IMR-90 (cell line): ENCODE measurements at regions of chr11 and their contacts with region 1.

Region 1: GRCh38 chr11:12200279-12201010 is 90.1 kb downstream of the MICAL2 start:
- DNase-seq: peak; percentile 83
- ATAC-seq: peak; percentile 43
- H3K4me3 ChIP-seq: no peak overlapping the region
- H3K27ac ChIP-seq: peak overlapping the region; percentile 87
- H3K4me1 ChIP-seq: peaks cover 35% of the 10 kb centered on the region
- H3K27me3 ChIP-seq: no peaks in the 10 kb centered on the region
- CTCF ChIP-seq: no peak
- POLR2A ChIP-seq: no peak
- RAD21 ChIP-seq: peak; percentile 6; the same call in 1 of the 2 replicates

Region 2: GRCh38 chr11:12182676-12183541 is 17.5 kb before region 1 on chr11:
- CTCF ChIA-PET with region 1: no interaction called
- POLR2A ChIA-PET with region 1: no interaction called
- dilution Hi-C with region 1: no loop called
- in situ Hi-C with region 1: no loop called
- intact Hi-C with region 1: loop called (anchors 2 kb)
- DNase-seq: peak; percentile 98
- ATAC-seq: peak; percentile 70
- H3K4me3 ChIP-seq: no peak overlapping the region
- H3K27ac ChIP-seq: peak overlapping the region; percentile 84
- H3K4me1 ChIP-seq: peaks cover 51% of the 10 kb centered on the region
- H3K27me3 ChIP-seq: no peaks in the 10 kb centered on the region
- CTCF ChIP-seq: no peak
- POLR2A ChIP-seq: peak; percentile 42
- RAD21 ChIP-seq: no peak; the same call in none of the 2 replicates